ENCODE measurements at regions of chr2 and their contacts with region 1.

Region 1: GRCh38 chr2:55050133-55050994 is at the start of gene RTN4:
- DNase-seq: peak; percentile 99
- ATAC-seq: peak; percentile 93 to 94 (median 93)
- H3K4me3 ChIP-seq: peak within 1 kb of the TSS; percentile 83
- H3K27ac ChIP-seq: peak within 1 kb of the TSS; percentile 90
- H3K4me1 ChIP-seq: peaks cover 21% of the 10 kb centered on the region
- H3K27me3 ChIP-seq: no peaks in the 10 kb centered on the region
- CTCF ChIP-seq: no peak
- total RNA-seq, gene RTN4: 235 to 394 (median 302) TPM

Region 2: GRCh38 chr2:54422072-54422581 is 628.2 kb before region 1 on chr2:
- intact Hi-C with region 1: no loop called
- DNase-seq: no peak
- ATAC-seq: no peak
- H3K4me3 ChIP-seq: no peak overlapping the region
- H3K27ac ChIP-seq: no peak overlapping the region
- H3K4me1 ChIP-seq: peaks cover 15% of the 10 kb centered on the region
- H3K27me3 ChIP-seq: no peaks in the 10 kb centered on the region
- CTCF ChIP-seq: no peak

Region 3: DNA sequence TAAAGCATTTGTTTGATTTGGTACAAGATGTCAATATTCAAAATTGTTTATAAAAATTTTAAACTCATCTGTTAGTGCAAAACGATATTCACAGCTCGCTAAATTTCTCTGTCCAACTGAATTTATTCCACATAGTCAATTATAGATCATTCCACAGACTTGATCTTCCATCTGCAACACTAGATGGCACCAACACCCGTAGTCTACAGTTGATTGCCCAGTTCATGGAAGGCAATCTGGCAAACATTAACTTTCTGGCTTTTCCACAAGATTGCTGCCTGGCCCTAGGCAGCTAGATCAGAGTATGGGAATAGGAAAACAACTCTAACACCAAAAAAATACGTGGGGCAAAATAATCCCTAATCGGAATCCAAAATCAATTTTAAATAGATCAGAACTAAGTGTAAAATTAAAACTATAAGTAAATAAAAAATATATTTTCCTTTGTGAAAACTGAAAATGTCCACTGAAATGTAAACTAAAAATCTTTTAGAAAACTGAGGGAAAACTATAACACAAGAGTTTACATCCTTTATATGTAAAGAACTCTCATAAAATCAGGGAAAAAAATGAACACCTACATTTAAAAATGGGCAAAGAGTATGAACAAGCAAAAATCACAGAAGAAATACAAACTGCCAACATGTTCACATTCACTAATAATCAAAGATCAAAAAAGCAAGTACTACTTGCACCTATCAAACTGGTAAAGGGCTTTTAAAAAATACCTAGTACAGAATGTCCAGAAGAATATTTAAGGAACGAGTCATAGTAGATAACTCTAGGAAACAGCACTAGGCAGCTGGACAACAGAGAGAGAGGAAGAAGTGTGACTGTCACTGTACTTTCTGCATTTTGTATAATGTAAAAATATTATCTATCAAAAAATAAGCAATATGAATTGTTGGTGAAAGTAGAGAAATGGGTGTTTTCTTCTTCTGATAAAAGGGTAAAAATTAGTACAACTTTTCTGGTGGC is 35.1 kb before region 1 on chr2:
- intact Hi-C with region 1: loop called in 1 of 2 experiments (anchors 5 kb)
- DNase-seq: no peak
- ATAC-seq: peak; percentile 69 to 79 (median 72)
- H3K4me3 ChIP-seq: no peak overlapping the region
- H3K27ac ChIP-seq: peak overlapping the region; percentile 95
- H3K4me1 ChIP-seq: peaks cover 38% of the 10 kb centered on the region
- H3K27me3 ChIP-seq: no peaks in the 10 kb centered on the region
- CTCF ChIP-seq: peak; percentile 71

Region 4: DNA sequence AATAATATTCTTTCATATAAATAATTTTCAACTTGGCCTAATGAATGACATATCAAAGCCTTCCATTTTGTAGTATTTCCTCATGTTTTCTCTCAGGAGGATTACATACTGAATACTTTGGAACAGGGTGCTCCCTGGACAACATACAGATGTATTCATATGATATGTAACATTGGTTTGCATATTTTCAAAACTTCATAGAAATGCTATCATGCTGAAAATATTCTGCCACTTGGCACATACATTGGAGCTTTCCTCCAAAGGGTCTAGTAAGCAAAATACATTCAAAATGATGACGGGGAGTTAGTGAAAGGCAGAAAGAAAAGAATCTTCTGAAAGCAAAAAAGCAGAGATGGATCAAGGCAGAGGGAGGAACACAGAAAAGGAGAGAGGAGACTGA is 38.0 kb after region 1 on chr2:
- intact Hi-C with region 1: no loop called
- DNase-seq: no peak
- ATAC-seq: no peak
- H3K4me3 ChIP-seq: no peak overlapping the region
- H3K27ac ChIP-seq: no peak overlapping the region
- H3K4me1 ChIP-seq: peaks cover 5% of the 10 kb centered on the region
- H3K27me3 ChIP-seq: no peaks in the 10 kb centered on the region
- CTCF ChIP-seq: no peak

Region 5: DNA sequence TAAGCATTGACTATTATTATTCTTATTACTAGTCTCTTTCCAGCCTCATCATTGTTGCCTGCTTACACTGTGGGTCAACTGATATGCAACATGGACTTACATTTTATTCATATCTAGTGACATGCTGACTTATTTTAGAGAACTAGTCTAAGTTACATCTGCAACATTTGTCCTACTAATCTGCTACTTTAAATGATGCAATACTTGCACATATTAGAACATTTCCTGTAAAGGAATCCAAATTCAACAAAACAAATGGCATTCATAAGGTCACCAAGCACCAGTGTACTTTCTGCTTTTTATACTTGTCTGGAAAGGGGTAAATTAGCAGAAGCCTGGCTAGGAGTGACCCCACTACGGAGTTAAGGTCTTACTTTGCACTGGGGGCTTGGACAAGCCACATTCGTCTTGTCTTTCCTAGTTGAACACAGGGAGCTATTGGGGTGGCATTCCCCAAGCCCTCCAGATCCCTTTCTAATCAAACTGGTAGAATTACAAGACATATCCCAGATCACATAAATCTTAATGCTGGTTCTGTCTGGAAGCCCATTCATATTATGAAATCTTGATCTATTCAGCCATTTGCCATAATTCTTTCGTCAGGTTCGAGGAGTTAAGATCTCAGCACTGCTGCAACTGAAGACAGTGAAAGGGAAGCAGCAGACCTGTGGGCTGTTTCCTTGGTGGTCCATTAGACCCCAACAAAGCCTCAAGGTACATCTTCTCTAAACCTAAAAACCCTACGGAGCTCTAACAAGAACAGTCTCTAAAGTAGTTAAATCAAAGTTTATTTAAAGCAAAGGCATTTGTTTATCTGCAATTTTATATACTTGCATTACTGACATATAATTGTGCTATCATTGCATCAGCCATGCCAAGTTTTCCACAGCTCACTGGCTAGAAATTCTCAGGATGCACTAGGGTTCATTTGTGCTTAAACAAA is 49.8 kb after region 1 on chr2:
- intact Hi-C with region 1: loop called (anchors 5 kb)
- DNase-seq: no peak
- ATAC-seq: peak; percentile 61 to 86 (median 83)
- H3K4me3 ChIP-seq: peak overlapping the region; percentile 26
- H3K27ac ChIP-seq: peak overlapping the region; percentile 80
- H3K4me1 ChIP-seq: peaks cover 39% of the 10 kb centered on the region
- H3K27me3 ChIP-seq: no peaks in the 10 kb centered on the region
- CTCF ChIP-seq: no peak

Region 6: GRCh38 chr2:55111570-55112228 is 61.3 kb after region 1 on chr2:
- intact Hi-C with region 1: loop called (anchors 5 kb)
- DNase-seq: peak; percentile 74 to 81
- ATAC-seq: peak; percentile 69 to 81 (median 76)
- H3K4me3 ChIP-seq: peak overlapping the region; percentile 35
- H3K27ac ChIP-seq: peak overlapping the region; percentile 82
- H3K4me1 ChIP-seq: peaks cover 33% of the 10 kb centered on the region
- H3K27me3 ChIP-seq: no peaks in the 10 kb centered on the region
- CTCF ChIP-seq: no peak

Region 7: DNA sequence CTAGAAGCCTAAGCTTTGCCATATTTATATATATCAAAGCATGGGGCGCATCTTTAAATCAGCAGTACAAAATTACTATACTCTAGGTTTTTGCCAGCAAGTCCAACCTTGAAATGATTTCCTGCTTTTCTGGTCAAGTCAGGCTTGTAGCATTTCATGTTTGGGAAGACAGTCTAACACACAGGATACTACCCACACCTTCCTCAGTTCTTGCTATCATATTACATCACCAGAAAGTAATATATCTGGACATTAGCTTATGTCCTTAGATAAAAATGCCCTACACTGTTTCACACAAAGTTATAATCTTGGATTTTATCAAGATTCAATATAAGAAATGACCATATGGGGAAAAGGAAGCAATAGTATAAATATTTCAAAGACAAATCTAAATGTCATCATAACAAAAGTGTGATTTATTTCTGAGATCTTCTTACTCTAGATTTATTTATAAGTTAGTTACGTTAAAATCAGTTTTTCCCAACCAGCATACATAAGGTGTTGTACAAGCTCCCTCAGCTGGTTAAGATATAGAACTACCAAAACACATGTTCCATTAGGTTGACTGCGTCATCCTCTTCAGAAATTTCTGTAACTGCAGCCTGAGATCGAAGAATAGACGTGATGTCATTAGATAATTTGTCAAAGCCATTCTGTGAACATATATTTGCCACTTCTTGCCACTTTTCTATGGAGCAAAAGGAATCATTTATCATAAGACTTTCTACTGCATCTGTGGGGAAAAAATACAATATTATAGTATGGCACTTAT is 125.1 kb after region 1 on chr2:
- intact Hi-C with region 1: no loop called
- DNase-seq: no peak
- ATAC-seq: peak; percentile 80 to 96 (median 86)
- H3K4me3 ChIP-seq: no peak overlapping the region
- H3K27ac ChIP-seq: no peak overlapping the region
- H3K4me1 ChIP-seq: peaks cover 6% of the 10 kb centered on the region
- H3K27me3 ChIP-seq: no peaks in the 10 kb centered on the region
- CTCF ChIP-seq: peak; percentile 68

Region 8: DNA sequence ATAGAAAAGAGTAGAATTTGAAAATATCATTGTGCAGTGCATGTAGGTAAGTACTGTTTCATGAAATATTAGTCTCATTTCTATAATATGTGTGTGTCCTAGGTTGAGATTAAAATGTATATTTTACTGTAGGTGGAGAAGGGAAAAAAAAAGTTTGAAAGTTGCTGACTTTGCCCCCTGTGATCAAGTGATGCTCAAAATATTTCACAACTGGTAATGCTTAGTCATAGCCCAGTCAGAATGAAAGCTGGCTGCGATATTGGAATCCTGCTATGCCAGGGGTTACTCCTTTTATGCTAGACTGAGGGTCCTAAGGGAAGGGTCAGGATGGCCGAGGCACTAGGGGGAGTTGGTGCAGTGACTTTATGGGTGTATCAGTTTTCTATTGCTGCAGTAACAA is 449.7 kb after region 1 on chr2:
- intact Hi-C with region 1: no loop called
- DNase-seq: no peak
- ATAC-seq: no peak
- H3K4me3 ChIP-seq: no peak overlapping the region
- H3K27ac ChIP-seq: no peak overlapping the region
- H3K4me1 ChIP-seq: no peaks in the 10 kb centered on the region
- H3K27me3 ChIP-seq: no peaks in the 10 kb centered on the region
- CTCF ChIP-seq: no peak

Measured in psoas muscle (tissue), 8 donors.